Common myeloid progenitor, CD34-positive (primary cell): ENCODE measurements at regions of chr2 and their contacts with region 1.

Region 1: GRCh38 chr2:33583194-33583938 is 15.7 kb downstream of the FAM98A start:
- DNase-seq: peak; percentile 48 to 80 (median 72)
- H3K4me3 ChIP-seq: no peak overlapping the region
- H3K27ac ChIP-seq: peak overlapping the region in 1 of 2 experiments; percentile 51
- H3K4me1 ChIP-seq: peaks cover 7 to 23% (median 14%) of the 10 kb centered on the region in 4 experiments
- H3K27me3 ChIP-seq: no peaks in the 10 kb centered on the region

Region 2: GRCh38 chr2:33412920-33413319 is 170.4 kb before region 1 on chr2:
- CTCF ChIA-PET with region 1: interaction called, 17 read pairs
- POLR2A ChIA-PET with region 1: no interaction called
- DNase-seq: peak; percentile 36 to 48 (median 37)
- H3K4me3 ChIP-seq: no peak overlapping the region
- H3K27ac ChIP-seq: no peak overlapping the region
- H3K4me1 ChIP-seq: peaks cover 0 to 11% (median 5%) of the 10 kb centered on the region in 4 experiments
- H3K27me3 ChIP-seq: no peaks in the 10 kb centered on the region

Region 3: DNA sequence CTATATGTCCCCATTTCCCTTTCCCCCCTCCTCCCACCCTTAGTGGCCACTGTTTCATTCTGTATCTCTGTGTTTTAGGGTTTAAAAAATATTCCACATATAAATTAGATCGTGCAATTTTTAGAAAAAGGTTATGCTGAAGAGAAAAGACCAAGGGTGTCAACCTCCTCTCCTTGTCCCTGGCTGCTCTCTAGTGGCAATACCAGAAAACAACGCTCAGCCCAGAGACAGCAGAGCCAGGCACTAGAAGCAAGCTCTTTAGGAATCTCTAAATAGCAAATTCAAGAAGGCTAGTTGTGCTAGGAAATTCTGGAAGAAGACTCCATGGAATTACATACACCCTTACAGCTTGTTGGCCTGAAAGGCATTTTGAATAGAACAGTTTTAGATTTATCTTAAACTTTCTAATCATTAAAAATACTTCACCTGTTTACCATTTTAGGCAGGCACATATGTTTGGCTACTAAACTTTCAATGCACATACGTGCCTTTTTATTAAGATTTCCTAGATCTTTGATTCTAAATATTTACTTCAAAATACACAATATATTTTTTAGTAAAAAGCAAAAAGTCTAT is 142.0 kb before region 1 on chr2:
- CTCF ChIA-PET with region 1: interaction called, 13 read pairs
- POLR2A ChIA-PET with region 1: no interaction called
- DNase-seq: peak; percentile 56 to 79 (median 75)
- H3K4me3 ChIP-seq: no peak overlapping the region
- H3K27ac ChIP-seq: no peak overlapping the region
- H3K4me1 ChIP-seq: peaks cover 6 to 30% (median 16%) of the 10 kb centered on the region in 4 experiments
- H3K27me3 ChIP-seq: no peaks in the 10 kb centered on the region

Region 4: GRCh38 chr2:33475224-33476130 is 107.9 kb before region 1 on chr2:
- CTCF ChIA-PET with region 1: interaction called, 24 read pairs
- POLR2A ChIA-PET with region 1: no interaction called
- DNase-seq: peak; percentile 91 to 94 (median 94)
- H3K4me3 ChIP-seq: peak overlapping the region; percentile 25 to 88 (median 69)
- H3K27ac ChIP-seq: peak overlapping the region; percentile 67 to 93
- H3K4me1 ChIP-seq: peaks cover 25 to 49% (median 39%) of the 10 kb centered on the region in 4 experiments
- H3K27me3 ChIP-seq: no peaks in the 10 kb centered on the region

Region 5: DNA sequence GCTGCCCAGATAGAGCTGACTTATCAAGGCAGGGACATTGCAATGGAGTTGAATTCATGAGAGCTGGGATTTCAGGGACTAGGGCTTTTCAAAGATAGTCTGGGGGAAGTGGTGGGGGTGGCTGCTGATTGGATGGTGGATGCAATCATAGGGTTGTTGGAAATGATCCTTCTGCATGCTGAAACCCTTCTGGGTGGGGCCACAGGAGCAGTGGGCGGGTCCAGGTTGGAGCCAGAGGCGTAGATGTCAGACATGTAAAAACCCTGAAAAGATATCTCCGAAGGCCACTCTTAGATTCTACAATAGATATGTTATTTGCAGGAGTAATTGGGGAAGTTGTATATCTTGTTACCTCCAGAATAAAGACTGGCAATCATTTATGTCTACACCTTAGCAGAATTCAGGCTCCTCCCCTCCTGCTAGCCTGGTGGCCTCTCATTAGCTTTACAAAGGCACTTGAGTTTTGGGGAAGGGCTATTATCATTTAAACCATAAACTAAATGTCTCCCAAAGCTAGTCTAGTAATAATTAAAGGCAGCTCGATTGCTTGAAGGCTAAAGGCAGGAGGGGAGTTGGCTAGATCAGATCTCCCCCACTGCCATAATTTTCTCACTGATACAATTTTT is 23.9 kb after region 1 on chr2:
- CTCF ChIA-PET with region 1: no interaction called
- POLR2A ChIA-PET with region 1: no interaction called
- DNase-seq: peak in 2 of 3 donors; percentile 4 to 22
- H3K4me3 ChIP-seq: no peak overlapping the region
- H3K27ac ChIP-seq: no peak overlapping the region
- H3K4me1 ChIP-seq: no peaks in the 10 kb centered on the region
- H3K27me3 ChIP-seq: no peaks in the 10 kb centered on the region

Region 6: DNA sequence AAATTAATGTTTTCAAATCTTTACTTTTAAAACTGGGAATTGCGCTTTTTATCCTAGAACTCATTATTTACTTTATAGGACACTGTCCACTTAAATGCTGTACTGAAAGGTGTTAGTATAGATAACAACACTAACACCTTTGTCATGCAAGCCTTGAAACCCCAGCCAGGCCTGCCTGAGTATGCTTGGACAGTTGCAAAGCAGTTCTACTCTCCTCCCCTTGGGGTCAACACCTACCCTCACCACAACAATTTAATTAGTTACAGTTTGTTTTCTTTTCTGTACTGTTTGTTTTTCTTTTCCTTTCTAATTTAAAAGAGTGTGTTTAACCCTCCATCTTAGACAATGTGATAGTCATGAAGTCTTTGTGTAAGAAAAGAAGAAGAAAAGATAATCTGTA is 34.6 kb after region 1 on chr2:
- CTCF ChIA-PET with region 1: no interaction called
- POLR2A ChIA-PET with region 1: no interaction called
- DNase-seq: no peak
- H3K4me3 ChIP-seq: no peak overlapping the region
- H3K27ac ChIP-seq: no peak overlapping the region
- H3K4me1 ChIP-seq: no peaks in the 10 kb centered on the region
- H3K27me3 ChIP-seq: no peaks in the 10 kb centered on the region

Region 7: DNA sequence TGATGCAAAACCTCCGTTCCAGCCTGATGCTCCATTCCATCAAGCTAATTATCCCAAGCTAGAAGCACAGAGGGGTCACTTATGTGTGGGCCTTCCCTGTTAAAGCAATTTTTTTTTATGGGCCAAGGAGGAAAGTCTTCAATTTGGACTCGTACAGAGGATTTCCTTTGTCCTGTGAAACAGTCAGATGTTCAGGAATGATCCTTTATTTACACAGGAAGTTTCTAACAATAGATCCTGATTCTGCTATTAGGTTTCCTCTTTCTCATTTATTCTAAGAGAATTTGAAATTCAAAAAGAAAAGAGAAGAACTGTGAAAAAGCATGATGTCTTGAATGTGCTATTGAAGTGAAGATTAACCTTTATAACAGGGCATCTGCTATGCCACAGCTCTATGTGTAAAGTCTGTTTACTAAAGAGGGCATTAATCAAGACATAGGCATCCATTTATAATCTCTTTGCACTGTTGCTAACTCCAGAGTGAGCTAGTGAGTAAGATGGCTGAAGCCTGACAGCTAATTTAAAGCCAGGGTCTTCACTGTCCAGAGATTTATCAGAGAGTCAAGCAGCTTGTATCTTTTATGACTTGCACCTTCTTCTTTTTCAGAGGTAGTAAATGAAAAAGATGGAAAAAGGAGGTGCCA is 121.1 kb after region 1 on chr2:
- CTCF ChIA-PET with region 1: no interaction called
- POLR2A ChIA-PET with region 1: no interaction called
- DNase-seq: no peak
- H3K4me3 ChIP-seq: no peak overlapping the region
- H3K27ac ChIP-seq: no peak overlapping the region
- H3K4me1 ChIP-seq: no peaks in the 10 kb centered on the region
- H3K27me3 ChIP-seq: no peaks in the 10 kb centered on the region